Caco-2 (cell line): ENCODE measurements at regions of chr2 and their contacts with region 1.

Region 1: DNA sequence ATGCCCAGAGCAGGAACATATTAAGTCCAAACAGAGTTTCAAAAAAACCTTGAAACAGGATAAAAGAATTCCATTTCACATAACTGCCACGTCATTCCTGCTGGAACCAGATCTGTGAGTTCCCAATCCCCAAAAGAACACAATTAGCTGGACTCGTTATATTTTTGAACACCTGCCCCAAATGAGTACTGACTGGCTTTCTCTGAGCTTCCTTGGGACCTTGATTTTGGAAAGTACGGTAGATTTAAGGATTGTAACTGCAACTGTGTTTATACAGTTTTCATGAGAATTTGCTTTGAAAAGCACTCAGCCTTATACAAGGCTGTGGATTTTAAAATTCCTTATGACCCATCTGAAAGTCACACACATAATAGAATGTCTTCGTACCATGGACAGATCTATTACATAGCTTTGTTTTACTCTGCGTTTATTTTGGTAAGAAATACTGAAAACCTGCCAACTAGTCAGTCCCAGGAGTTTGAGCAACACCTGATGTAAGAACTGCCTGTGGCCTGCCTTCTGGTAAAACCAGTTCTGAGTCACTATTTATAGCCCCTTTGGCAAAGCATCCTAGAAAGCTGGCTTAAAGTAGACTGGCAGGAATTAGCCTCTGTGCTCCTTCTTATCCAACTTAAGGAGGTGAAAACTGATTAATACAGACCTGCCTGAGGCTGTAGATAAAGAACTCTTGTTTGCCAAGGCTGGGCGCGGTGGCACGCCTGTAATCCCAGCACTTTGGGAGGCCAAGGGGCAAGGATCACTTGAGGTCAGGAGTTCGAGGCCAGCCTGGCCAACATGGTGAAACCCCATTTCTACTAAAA is 48.1 kb downstream of the MERTK start:
- DNase-seq: peak; percentile 87
- H3K4me3 ChIP-seq: no peak overlapping the region
- H3K4me3 Mint-ChIP-seq: peak overlapping the region; percentile 66
- H3K27ac Mint-ChIP-seq: peak overlapping the region; percentile 73
- H3K4me1 ChIP-seq: peaks cover 38% of the 10 kb centered on the region
- H3K4me1 Mint-ChIP-seq: peaks cover 58% of the 10 kb centered on the region
- H3K27me3 ChIP-seq: no peaks in the 10 kb centered on the region
- H3K27me3 Mint-ChIP-seq: no peaks in the 10 kb centered on the region
- CTCF ChIP-seq: no peak

Region 2: DNA sequence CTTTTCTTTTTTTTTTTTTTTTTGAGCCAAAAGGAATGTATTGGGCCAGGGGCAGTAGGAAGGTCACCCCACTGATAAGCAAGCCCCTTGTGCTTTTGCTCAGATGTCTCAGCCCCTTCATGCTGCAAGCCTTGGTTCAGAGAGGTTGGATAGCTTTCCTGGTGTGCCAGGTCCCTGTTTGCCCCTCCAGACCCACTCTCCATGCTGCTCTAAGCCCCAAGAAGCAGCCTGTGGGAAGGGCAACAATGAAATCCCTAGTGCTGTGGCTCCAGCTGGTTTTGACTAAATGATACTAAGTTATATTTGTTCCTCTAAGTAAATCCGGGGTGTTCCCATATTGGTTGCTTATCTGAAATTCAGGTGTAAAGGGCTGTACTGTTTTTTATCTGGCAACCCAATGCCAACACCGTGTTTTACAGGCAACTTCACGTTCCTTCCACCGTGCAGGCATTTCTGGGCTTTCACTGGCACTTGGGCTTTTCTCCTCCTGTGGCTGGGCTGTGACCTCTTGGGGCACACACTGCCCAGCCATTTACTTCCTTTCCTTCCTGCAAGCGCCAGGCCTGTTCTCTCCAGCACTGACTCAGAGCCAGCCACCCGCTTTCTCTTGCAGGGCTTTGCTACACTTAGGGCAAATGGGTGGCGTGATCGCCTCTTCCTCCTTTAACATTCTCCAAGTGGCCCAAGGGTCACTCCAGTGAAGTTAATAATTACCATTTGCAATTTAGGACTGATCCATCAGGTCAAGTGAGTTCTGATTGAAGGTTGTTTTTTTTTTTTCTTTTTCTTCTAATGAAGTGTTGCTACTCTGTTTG is 26.5 kb before region 1 on chr2:
- CTCF ChIA-PET with region 1: no interaction called
- POLR2A ChIA-PET with region 1: interaction called, 3 read pairs
- intact Hi-C with region 1: loop called (anchors 1 kb)
- DNase-seq: peak; percentile 85 to 92
- H3K4me3 ChIP-seq: peak overlapping the region; percentile 18; the same call in 1 of the 2 replicates
- H3K4me3 Mint-ChIP-seq: peak overlapping the region; percentile 62
- H3K27ac Mint-ChIP-seq: peak overlapping the region; percentile 82
- H3K4me1 ChIP-seq: peaks cover 53% of the 10 kb centered on the region
- H3K4me1 Mint-ChIP-seq: peaks cover 49% of the 10 kb centered on the region
- H3K27me3 ChIP-seq: no peaks in the 10 kb centered on the region
- H3K27me3 Mint-ChIP-seq: no peaks in the 10 kb centered on the region
- CTCF ChIP-seq: no peak

Region 3: GRCh38 chr2:111932841-111933291 is 13.6 kb before region 1 on chr2:
- CTCF ChIA-PET with region 1: no interaction called
- POLR2A ChIA-PET with region 1: no interaction called
- intact Hi-C with region 1: loop called (anchors 1 kb)
- DNase-seq: peak; percentile 65 to 86
- H3K4me3 ChIP-seq: no peak overlapping the region
- H3K4me3 Mint-ChIP-seq: peak overlapping the region; percentile 3
- H3K27ac Mint-ChIP-seq: peak overlapping the region; percentile 43
- H3K4me1 ChIP-seq: peaks cover 15% of the 10 kb centered on the region
- H3K4me1 Mint-ChIP-seq: peaks cover 15% of the 10 kb centered on the region
- H3K27me3 ChIP-seq: no peaks in the 10 kb centered on the region
- H3K27me3 Mint-ChIP-seq: no peaks in the 10 kb centered on the region
- CTCF ChIP-seq: no peak

Region 4: DNA sequence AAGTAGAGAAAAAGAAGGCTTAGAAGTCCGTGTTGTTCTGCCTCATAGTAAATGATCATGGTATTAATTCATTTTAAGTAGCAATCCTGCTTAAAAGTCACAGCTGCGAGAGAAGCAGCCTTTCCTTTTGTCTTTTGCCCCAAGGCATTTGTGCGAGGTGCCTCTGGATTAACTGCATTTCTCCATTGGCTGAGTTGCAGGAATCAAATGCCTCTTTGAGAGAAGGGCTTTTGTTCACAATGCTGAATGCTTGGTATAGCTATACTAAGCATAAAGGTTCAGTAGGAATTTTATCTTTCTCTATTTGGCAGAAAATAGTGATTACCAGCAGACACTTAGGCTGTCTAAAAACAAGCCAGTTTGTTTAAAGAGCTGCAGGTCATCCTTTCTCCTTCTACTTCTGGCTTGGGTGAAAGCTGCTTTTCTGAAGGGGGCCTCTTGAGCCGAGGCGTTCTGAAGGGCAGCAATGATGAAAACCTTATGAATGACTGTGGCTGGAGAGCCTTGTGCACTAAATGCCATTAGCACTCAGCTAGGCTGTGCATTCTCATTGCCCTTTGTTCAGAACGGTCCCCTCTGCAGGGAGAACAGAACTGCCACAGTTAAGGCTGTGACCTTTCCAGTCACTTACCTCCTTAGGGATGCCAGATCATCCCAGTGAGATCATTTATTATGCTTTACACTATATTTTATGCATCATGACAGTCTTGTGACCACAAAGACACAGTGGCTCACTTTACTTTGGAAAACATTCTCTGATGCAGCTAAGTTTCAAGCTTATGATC is 39.8 kb after region 1 on chr2:
- CTCF ChIA-PET with region 1: interaction called, 3 read pairs
- POLR2A ChIA-PET with region 1: interaction called, 3 read pairs
- intact Hi-C with region 1: loop called (anchors 1 kb)
- DNase-seq: peak in 1 of 2 experiments; percentile 18
- H3K4me3 ChIP-seq: no peak overlapping the region
- H3K4me3 Mint-ChIP-seq: peak overlapping the region; percentile 19
- H3K27ac Mint-ChIP-seq: peak overlapping the region; percentile 55
- H3K4me1 ChIP-seq: peaks cover 61% of the 10 kb centered on the region
- H3K4me1 Mint-ChIP-seq: peaks cover 62% of the 10 kb centered on the region
- H3K27me3 ChIP-seq: no peaks in the 10 kb centered on the region
- H3K27me3 Mint-ChIP-seq: no peaks in the 10 kb centered on the region
- CTCF ChIP-seq: no peak

Region 5: DNA sequence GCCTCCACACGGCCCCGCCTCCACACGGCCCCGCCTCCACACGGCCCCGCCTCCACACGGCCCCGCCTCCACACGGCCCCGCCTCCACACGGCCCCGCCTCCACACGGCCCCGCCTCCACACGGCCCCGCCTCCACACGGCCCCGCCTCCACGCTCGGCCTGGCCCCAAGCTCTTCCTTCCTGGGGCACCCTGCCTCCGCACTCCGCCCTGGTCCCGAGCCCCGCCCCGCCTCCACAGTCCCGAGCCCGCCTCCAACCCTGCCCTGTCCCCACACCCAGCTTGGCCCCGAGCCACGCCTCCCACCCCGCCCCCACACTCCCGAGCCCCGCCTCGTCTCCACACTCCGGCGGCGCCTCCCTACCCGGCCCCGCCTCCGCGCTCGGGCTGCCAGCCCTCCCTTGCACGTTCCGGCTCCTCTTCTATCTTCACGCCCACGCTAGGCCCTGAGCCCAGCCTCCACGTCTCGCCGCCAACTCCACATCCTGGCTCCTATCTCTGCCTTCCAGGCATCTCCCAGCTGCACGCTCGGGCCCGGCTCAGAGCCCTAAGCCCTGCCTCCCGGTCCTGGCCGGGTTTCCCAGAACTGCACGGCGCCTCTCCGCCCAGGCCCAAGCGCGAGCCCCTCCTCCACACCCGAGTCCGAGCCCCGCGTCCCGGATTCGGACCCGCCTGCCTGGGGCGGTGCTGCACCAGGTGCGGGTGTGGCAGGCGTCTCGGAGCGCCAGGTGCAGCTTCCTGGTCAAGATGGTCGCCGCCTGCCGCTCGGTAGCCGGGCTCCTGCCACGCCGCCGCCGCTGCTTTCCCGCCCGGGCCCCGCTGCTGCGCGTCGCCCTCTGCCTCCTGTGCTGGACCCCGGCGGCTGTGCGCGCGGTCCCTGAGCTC is 108.6 kb after region 1 on chr2 and contains the start of gene TMEM87B:
- CTCF ChIA-PET with region 1: no interaction called
- POLR2A ChIA-PET with region 1: no interaction called
- intact Hi-C with region 1: loop called (anchors 2 kb)
- DNase-seq: peak; percentile 99
- H3K4me3 ChIP-seq: peak within 1 kb of the TSS; percentile 87
- H3K4me3 Mint-ChIP-seq: peak within 1 kb of the TSS; percentile 85
- H3K27ac Mint-ChIP-seq: peak within 1 kb of the TSS; percentile 72
- H3K4me1 ChIP-seq: peaks cover 15% of the 10 kb centered on the region
- H3K4me1 Mint-ChIP-seq: peaks cover 14% of the 10 kb centered on the region
- H3K27me3 ChIP-seq: no peaks in the 10 kb centered on the region
- H3K27me3 Mint-ChIP-seq: no peaks in the 10 kb centered on the region
- CTCF ChIP-seq: no peak
- total RNA-seq, gene TMEM87B: 16.3 and 17.1 TPM in 2 replicates